Heart right ventricle (tissue), 16 donors: ENCODE measurements at regions of chr11 and their contacts with region 1.

Region 1: GRCh38 chr11:93169950-93170561 is 27.7 kb downstream of the SLC36A4 start:
- DNase-seq: no peak
- ATAC-seq: no peak
- H3K4me3 ChIP-seq: no peak overlapping the region
- H3K27ac ChIP-seq: no peak overlapping the region
- H3K4me1 ChIP-seq: peaks cover 0 to 11% (median 0%) of the 10 kb centered on the region in 9 donors
- H3K27me3 ChIP-seq: no peaks in the 10 kb centered on the region
- CTCF ChIP-seq: peak in 7 of 9 donors; percentile 17 to 51 (median 32)

Region 2: GRCh38 chr11:92528001-92528400 is 642.1 kb before region 1 on chr11:
- intact Hi-C with region 1: loop called in 1 of 10 experiments (anchors 10 kb)
- DNase-seq: no peak
- ATAC-seq: no peak
- H3K4me3 ChIP-seq: no peak overlapping the region
- H3K27ac ChIP-seq: no peak overlapping the region
- H3K4me1 ChIP-seq: no peaks in the 10 kb centered on the region
- H3K27me3 ChIP-seq: no peaks in the 10 kb centered on the region
- CTCF ChIP-seq: no peak

Region 3: GRCh38 chr11:93225662-93226061 is 55.6 kb after region 1 on chr11:
- intact Hi-C with region 1: no loop called
- DNase-seq: no peak
- ATAC-seq: no peak
- H3K4me3 ChIP-seq: no peak overlapping the region
- H3K27ac ChIP-seq: no peak overlapping the region
- H3K4me1 ChIP-seq: no peaks in the 10 kb centered on the region
- H3K27me3 ChIP-seq: peaks cover 0 to 6% (median 0%) of the 10 kb centered on the region in 7 donors
- CTCF ChIP-seq: peak in 8 of 9 donors; percentile 9 to 61 (median 48)